ENCODE measurements at regions of chr17 and their contacts with region 1.

Region 1: GRCh38 chr17:76307299-76307965 is 644 bp downstream of the QRICH2 start:
- DNase-seq: peak; percentile 59
- H3K4me3 ChIP-seq: no peak overlapping the region
- H3K27ac ChIP-seq: no peak overlapping the region
- H3K4me1 ChIP-seq: peaks cover 0 to 6% (median 0%) of the 10 kb centered on the region in 6 donors
- H3K27me3 ChIP-seq: no peaks in the 10 kb centered on the region
- CTCF ChIP-seq: no peak
- POLR2A ChIP-seq: no peak

Region 2: GRCh38 chr17:75950821-75951554 is 356.4 kb before region 1 on chr17:
- intact Hi-C with region 1: no loop called
- DNase-seq: no peak
- H3K4me3 ChIP-seq: no peak overlapping the region
- H3K27ac ChIP-seq: peak overlapping the region in 2 of 8 donors; percentile 7 to 15
- H3K4me1 ChIP-seq: peaks cover 0 to 14% (median 0%) of the 10 kb centered on the region in 6 donors
- H3K27me3 ChIP-seq: no peaks in the 10 kb centered on the region
- CTCF ChIP-seq: no peak
- POLR2A ChIP-seq: no peak

Region 3: GRCh38 chr17:76353599-76354316 is 46.3 kb after region 1 on chr17 and contains the start of gene PRPSAP1:
- intact Hi-C with region 1: no loop called
- DNase-seq: peak; percentile 97
- H3K4me3 ChIP-seq: peak within 1 kb of the TSS; percentile 61 to 98 (median 90)
- H3K27ac ChIP-seq: peak within 1 kb of the TSS; percentile 87 to 93 (median 90)
- H3K4me1 ChIP-seq: peaks cover 6 to 35% (median 17%) of the 10 kb centered on the region in 6 donors
- H3K27me3 ChIP-seq: no peaks in the 10 kb centered on the region
- CTCF ChIP-seq: peak; percentile 18 to 78 (median 59)
- POLR2A ChIP-seq: peak in 1 of 3 donors; percentile 63
- total RNA-seq, gene PRPSAP1: 32.5 to 54.1 (median 38.3) TPM

Region 4: GRCh38 chr17:76397687-76398487 is 90.5 kb after region 1 on chr17:
- intact Hi-C with region 1: loop called (anchors 5 kb)
- DNase-seq: peak; percentile 95
- H3K4me3 ChIP-seq: no peak overlapping the region
- H3K27ac ChIP-seq: no peak overlapping the region
- H3K4me1 ChIP-seq: peaks cover 0 to 19% (median 17%) of the 10 kb centered on the region in 6 donors
- H3K27me3 ChIP-seq: no peaks in the 10 kb centered on the region
- CTCF ChIP-seq: peak; percentile 96 to 100 (median 99)
- POLR2A ChIP-seq: no peak

Region 5: GRCh38 chr17:76501018-76501826 is 193.8 kb after region 1 on chr17 and contains the start of gene RHBDF2:
- intact Hi-C with region 1: loop called (anchors 10 kb)
- DNase-seq: peak; percentile 99
- H3K4me3 ChIP-seq: peak within 1 kb of the TSS; percentile 51 to 99 (median 91)
- H3K27ac ChIP-seq: peak within 1 kb of the TSS; percentile 88 to 98 (median 95)
- H3K4me1 ChIP-seq: peaks cover 34 to 84% (median 66%) of the 10 kb centered on the region in 6 donors
- H3K27me3 ChIP-seq: no peaks in the 10 kb centered on the region
- CTCF ChIP-seq: peak in 3 of 11 experiments; percentile 2 to 47 (median 22)
- POLR2A ChIP-seq: peak; percentile 65 to 91 (median 75)
- total RNA-seq, gene RHBDF2: 95.1 to 147 (median 114) TPM